ENCODE measurements at regions of chr7 and their contacts with region 1.

Region 1: GRCh38 chr7:5083311-5083711 is 37.7 kb downstream of the RBAK start:
- DNase-seq: no peak
- H3K4me3 Mint-ChIP-seq: no peak overlapping the region
- H3K27ac Mint-ChIP-seq: no peak overlapping the region
- H3K4me1 Mint-ChIP-seq: no peaks in the 10 kb centered on the region
- H3K27me3 Mint-ChIP-seq: no peaks in the 10 kb centered on the region
- CTCF ChIP-seq: no peak

Region 2: DNA sequence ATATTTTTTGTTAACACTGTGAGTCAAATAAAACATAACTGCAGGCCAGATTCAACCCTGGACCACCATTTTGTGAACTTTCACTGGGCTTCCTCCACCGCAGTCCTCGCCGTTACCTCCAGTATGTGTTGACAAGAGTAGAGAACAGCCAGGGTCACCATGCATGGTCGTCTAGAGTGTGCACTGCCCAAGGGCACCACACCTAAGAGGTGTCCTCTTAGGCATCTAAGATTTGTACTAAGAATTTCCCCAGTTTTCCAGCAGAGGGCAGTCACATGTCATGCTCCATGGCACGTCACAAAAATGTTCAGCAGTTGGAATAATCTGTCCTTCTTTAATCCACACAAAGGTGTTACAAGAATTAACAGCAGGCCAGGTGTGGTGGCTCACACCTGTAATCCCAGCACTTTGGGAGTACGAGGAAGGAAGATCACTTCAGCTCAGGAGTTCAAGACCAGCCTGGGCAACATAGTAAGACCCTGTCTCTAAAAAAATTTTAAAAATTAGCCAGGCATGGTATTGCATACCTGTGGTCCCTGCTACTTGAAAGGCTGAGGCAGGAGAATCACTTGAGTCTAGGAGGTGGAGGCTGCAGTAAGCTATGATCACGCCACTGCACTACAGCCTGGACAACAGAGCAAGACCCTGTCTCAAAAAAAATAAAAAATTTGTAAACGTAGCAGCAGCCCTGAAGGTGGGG is 472.4 kb before region 1 on chr7:
- CTCF ChIA-PET with region 1: no interaction called
- POLR2A ChIA-PET with region 1: no interaction called
- intact Hi-C with region 1: loop called (anchors 10 kb)
- DNase-seq: peak; percentile 78
- H3K4me3 Mint-ChIP-seq: no peak overlapping the region
- H3K27ac Mint-ChIP-seq: no peak overlapping the region
- H3K4me1 Mint-ChIP-seq: peaks cover 6% of the 10 kb centered on the region
- H3K27me3 Mint-ChIP-seq: no peaks in the 10 kb centered on the region
- CTCF ChIP-seq: peak; percentile 81

Region 3: GRCh38 chr7:4797858-4798705 is 285.2 kb before region 1 on chr7:
- CTCF ChIA-PET with region 1: interaction called, 24 read pairs
- POLR2A ChIA-PET with region 1: no interaction called
- intact Hi-C with region 1: loop called (anchors 1 kb)
- DNase-seq: peak; percentile 36
- H3K4me3 Mint-ChIP-seq: no peak overlapping the region
- H3K27ac Mint-ChIP-seq: no peak overlapping the region
- H3K4me1 Mint-ChIP-seq: no peaks in the 10 kb centered on the region
- H3K27me3 Mint-ChIP-seq: no peaks in the 10 kb centered on the region
- CTCF ChIP-seq: peak; percentile 87

Region 4: DNA sequence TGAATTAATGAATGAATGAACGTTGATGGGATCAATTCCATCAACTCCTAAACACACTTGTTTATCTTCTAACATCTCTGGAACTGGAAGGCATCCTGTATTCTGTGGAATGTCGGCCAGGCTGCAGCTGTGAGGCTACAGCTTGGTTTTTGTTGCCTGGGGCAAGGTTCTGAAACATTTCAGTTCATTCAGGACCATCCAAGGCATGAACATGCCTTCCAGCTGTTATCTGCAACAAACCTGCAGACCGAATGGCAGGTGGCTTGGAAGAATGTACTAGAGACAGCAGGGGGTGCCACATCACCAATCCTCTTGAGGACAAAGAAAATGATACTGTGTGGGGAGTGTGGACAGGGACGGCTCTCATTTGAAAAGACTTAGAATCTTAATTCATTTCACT is 233.9 kb before region 1 on chr7:
- CTCF ChIA-PET with region 1: interaction called, 11 read pairs
- POLR2A ChIA-PET with region 1: no interaction called
- intact Hi-C with region 1: loop called (anchors 1 kb)
- DNase-seq: peak; percentile 62
- H3K4me3 Mint-ChIP-seq: no peak overlapping the region
- H3K27ac Mint-ChIP-seq: no peak overlapping the region
- H3K4me1 Mint-ChIP-seq: no peaks in the 10 kb centered on the region
- H3K27me3 Mint-ChIP-seq: peaks cover 24% of the 10 kb centered on the region
- CTCF ChIP-seq: peak; percentile 47

Region 5: GRCh38 chr7:4962872-4963800 is 120.2 kb before region 1 on chr7:
- CTCF ChIA-PET with region 1: interaction called, 10 read pairs
- POLR2A ChIA-PET with region 1: no interaction called
- intact Hi-C with region 1: no loop called
- DNase-seq: no peak
- H3K4me3 Mint-ChIP-seq: no peak overlapping the region
- H3K27ac Mint-ChIP-seq: no peak overlapping the region
- H3K4me1 Mint-ChIP-seq: no peaks in the 10 kb centered on the region
- H3K27me3 Mint-ChIP-seq: peaks cover 19% of the 10 kb centered on the region
- CTCF ChIP-seq: no peak

Region 6: DNA sequence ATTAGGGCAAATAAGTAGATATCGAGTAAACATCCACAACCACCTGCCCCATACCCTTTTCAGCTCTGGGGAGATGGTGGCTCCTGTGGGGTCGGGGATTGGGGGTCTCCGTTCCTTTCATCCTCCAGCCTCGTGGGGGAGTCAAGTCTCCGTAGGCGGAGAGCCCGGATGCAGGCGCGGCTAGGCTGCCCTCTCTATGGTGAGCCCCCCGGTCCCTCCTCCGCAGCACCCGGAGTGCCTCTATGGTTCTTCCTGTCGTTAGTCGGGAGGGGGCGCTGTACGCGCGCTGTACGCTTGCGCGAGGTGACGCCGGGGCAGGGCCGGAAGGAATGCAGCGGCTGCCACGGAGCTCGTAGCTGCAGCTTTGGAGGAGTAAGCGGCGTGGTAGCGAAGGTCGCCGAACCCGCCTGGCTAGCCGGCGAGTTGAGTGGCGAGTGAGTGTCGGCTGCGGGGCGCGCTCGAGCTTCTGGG is 109.5 kb before region 1 on chr7:
- CTCF ChIA-PET with region 1: interaction called, 12 read pairs
- POLR2A ChIA-PET with region 1: no interaction called
- intact Hi-C with region 1: loop called (anchors 1 kb)
- DNase-seq: peak; percentile 92
- H3K4me3 Mint-ChIP-seq: peak overlapping the region; percentile 94
- H3K27ac Mint-ChIP-seq: peak overlapping the region; percentile 93
- H3K4me1 Mint-ChIP-seq: no peaks in the 10 kb centered on the region
- H3K27me3 Mint-ChIP-seq: no peaks in the 10 kb centered on the region
- CTCF ChIP-seq: peak; percentile 82